ENCODE measurements at regions of chr6 and their contacts with region 1.

Region 1: GRCh38 chr6:13767121-13767808 is 47.1 kb downstream of the MCUR1 start:
- DNase-seq: peak in 8 of 9 donors; percentile 12 to 48 (median 30)
- ATAC-seq: peak; percentile 66
- H3K4me3 ChIP-seq: peak overlapping the region; percentile 51
- H3K4me3 Mint-ChIP-seq: peak overlapping the region; percentile 53 to 86 (median 76)
- H3K27ac ChIP-seq: no peak overlapping the region
- H3K27ac Mint-ChIP-seq: peak overlapping the region in 7 of 9 donors; percentile 6 to 92 (median 59)
- H3K4me1 ChIP-seq: peaks cover 8 to 13% of the 10 kb centered on the region in 2 donors
- H3K4me1 Mint-ChIP-seq: peaks cover 10 to 49% (median 30%) of the 10 kb centered on the region in 7 donors
- H3K27me3 ChIP-seq: no peaks in the 10 kb centered on the region
- H3K27me3 Mint-ChIP-seq: peaks cover 0 to 6% (median 0%) of the 10 kb centered on the region in 5 donors

Region 2: GRCh38 chr6:13635948-13636658 is 131.2 kb before region 1 on chr6:
- CTCF ChIA-PET with region 1: no interaction called
- POLR2A ChIA-PET with region 1: no interaction called
- intact Hi-C with region 1: loop called in 1 of 2 experiments (anchors 5 kb)
- DNase-seq: peak in 1 of 9 donors; percentile 13
- ATAC-seq: peak; percentile 34
- H3K4me3 ChIP-seq: no peak overlapping the region
- H3K4me3 Mint-ChIP-seq: peak overlapping the region in 5 of 10 donors; percentile 9 to 69 (median 51)
- H3K27ac ChIP-seq: peak overlapping the region; percentile 42
- H3K27ac Mint-ChIP-seq: peak overlapping the region in 8 of 9 donors; percentile 49 to 87 (median 74)
- H3K4me1 ChIP-seq: peaks cover 0 to 6% of the 10 kb centered on the region in 2 donors
- H3K4me1 Mint-ChIP-seq: peaks cover 15 to 37% (median 31%) of the 10 kb centered on the region in 7 donors
- H3K27me3 ChIP-seq: no peaks in the 10 kb centered on the region
- H3K27me3 Mint-ChIP-seq: no peaks in the 10 kb centered on the region

Region 3: GRCh38 chr6:13725570-13725969 is 41.7 kb before region 1 on chr6:
- CTCF ChIA-PET with region 1: no interaction called
- POLR2A ChIA-PET with region 1: interaction called, 3 read pairs
- intact Hi-C with region 1: loop called in 1 of 2 experiments (anchors 2 kb)
- DNase-seq: peak in 1 of 9 donors; percentile 13
- ATAC-seq: peak; percentile 53
- H3K4me3 ChIP-seq: no peak overlapping the region
- H3K4me3 Mint-ChIP-seq: peak overlapping the region in 3 of 10 donors; percentile 24 to 66 (median 54)
- H3K27ac ChIP-seq: no peak overlapping the region
- H3K27ac Mint-ChIP-seq: peak overlapping the region in 3 of 9 donors; percentile 23 to 89 (median 85)
- H3K4me1 ChIP-seq: peaks cover 5 to 7% of the 10 kb centered on the region in 2 donors
- H3K4me1 Mint-ChIP-seq: peaks cover 12 to 27% (median 21%) of the 10 kb centered on the region in 7 donors
- H3K27me3 ChIP-seq: no peaks in the 10 kb centered on the region
- H3K27me3 Mint-ChIP-seq: peaks cover 0 to 2% (median 0%) of the 10 kb centered on the region in 5 donors